ENCODE measurements at regions of chr1 and their contacts with region 1.

Region 1: GRCh38 chr1:11045428-11046269 is 1.4 kb downstream of the MASP2 start:
- DNase-seq: no peak
- ATAC-seq: peak; percentile 3; the same call in 1 of the 3 replicates
- H3K4me3 ChIP-seq: peak overlapping the region in 1 of 3 experiments; percentile 72; a peak in 1 of 6 replicates
- H3K27ac ChIP-seq: peak overlapping the region; percentile 85
- H3K4me1 ChIP-seq: peaks cover 28% of the 10 kb centered on the region
- H3K27me3 ChIP-seq: no peaks in the 10 kb centered on the region
- CTCF ChIP-seq: no peak
- EP300 ChIP-seq: no peak
- POLR2A ChIP-seq: no peak
- RAD21 ChIP-seq: no peak

Region 2: DNA sequence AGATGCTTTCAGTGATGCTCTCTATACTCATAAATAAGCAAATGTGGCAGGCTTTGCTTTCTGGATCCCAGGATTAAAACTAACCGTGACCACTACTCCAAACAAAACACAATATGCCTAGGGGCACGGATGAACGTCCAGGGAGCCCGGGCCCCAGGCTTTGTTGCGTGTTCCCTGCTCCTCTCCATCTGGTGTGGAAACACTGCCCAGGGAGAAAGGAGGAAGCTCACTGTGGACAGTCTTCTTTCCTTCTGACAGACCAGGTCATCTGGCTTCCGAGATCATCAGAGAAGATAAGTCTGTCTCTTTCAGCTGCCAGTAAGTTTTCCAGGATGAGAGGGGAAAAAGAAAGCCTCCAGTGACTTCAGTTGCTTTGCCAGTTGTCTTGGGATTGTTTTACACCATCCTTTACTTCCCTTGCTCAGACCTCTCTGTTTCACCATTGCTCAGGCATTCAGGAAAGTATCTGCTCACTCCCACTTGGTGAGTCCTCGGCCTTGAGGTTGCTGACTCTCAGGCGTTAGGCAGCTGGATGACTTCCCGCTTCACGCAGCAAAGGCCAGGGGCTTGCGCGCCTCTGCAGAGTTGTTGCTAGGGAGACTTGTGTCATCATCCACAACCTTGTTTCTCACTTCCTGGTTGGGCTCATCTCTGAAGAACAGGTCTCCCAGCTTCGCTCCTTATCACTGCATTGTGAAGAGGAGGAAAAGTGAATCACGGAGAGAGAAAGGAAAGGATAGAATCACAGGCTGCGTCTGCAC is 667.4 kb before region 1 on chr1:
- CTCF ChIA-PET with region 1: no interaction called
- POLR2A ChIA-PET with region 1: no interaction called
- in situ Hi-C with region 1: no loop called
- intact Hi-C with region 1: no loop called
- DNase-seq: no peak
- ATAC-seq: no peak
- H3K4me3 ChIP-seq: no peak overlapping the region
- H3K27ac ChIP-seq: no peak overlapping the region
- H3K4me1 ChIP-seq: peaks cover 11% of the 10 kb centered on the region; the same call in 1 of the 2 replicates
- H3K27me3 ChIP-seq: no peaks in the 10 kb centered on the region
- CTCF ChIP-seq: no peak
- EP300 ChIP-seq: no peak
- POLR2A ChIP-seq: no peak
- RAD21 ChIP-seq: no peak

Region 3: DNA sequence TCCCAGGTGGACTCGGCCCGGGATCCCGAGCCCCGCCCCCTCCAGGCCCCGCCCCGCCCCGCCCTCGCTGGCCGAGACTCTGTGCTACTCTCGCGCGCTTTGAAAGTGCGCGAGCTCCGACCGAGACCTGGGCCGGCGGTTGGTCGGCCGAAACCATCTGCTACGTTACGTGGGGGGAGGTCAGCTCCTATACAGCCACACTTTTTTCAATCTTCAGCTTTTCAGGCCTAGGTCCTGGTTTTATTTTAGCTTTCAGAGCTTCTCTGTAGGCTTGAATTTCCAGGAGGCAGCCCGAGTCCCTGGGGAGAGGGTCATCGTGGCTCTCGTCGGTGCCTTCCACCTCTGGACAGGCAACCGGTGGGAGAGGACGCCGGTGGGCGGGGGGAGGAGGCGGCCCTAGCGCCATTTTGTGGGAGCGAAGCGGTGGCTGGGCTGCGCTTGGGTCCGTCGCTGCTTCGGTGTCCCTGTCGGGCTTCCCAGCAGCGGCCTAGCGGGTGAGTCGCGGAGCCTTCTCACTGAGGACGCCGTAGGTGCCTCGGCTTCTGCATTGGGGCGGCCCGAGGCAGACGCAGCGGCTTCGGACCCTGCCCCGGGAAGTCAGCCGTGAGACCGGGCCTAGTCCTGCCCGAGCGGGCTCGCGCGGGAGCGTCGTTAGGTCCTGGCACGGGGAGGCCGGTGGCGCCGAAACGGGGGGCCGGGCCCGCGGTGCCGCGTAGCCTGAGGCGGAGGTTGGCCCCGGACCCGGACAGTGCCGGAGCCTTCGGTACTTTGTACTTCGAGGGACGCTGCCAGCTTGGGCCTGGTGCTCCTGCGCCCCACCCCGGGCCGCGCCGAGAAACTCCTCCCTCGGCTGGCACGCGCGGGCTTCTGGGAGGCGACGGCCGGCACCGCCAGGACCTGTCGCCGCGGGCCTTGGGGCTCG is 33.1 kb before region 1 on chr1 and contains the start of gene TARDBP:
- CTCF ChIA-PET with region 1: no interaction called
- POLR2A ChIA-PET with region 1: interaction called, 13 read pairs
- in situ Hi-C with region 1: no loop called
- intact Hi-C with region 1: no loop called
- DNase-seq: peak; percentile 79
- ATAC-seq: peak; percentile 88
- H3K4me3 ChIP-seq: peak within 1 kb of the TSS; percentile 83 to 100 (median 99)
- H3K27ac ChIP-seq: peak within 1 kb of the TSS; percentile 99
- H3K4me1 ChIP-seq: peaks cover 40% of the 10 kb centered on the region
- H3K27me3 ChIP-seq: no peaks in the 10 kb centered on the region; a peak in 1 of 5 replicates
- CTCF ChIP-seq: no peak
- EP300 ChIP-seq: peak in 1 of 2 experiments; percentile 10; a peak in 1 of 4 replicates
- POLR2A ChIP-seq: peak; percentile 89 to 97
- RAD21 ChIP-seq: no peak; the same call in 1 of the 2 replicates
- total RNA-seq, gene TARDBP: 62.4 and 159 TPM in 2 replicates

Region 4: GRCh38 chr1:11026052-11026451 is 19.6 kb before region 1 on chr1:
- CTCF ChIA-PET with region 1: no interaction called
- POLR2A ChIA-PET with region 1: no interaction called
- in situ Hi-C with region 1: no loop called
- intact Hi-C with region 1: no loop called
- DNase-seq: no peak
- ATAC-seq: no peak
- H3K4me3 ChIP-seq: no peak overlapping the region
- H3K27ac ChIP-seq: no peak overlapping the region
- H3K4me1 ChIP-seq: no peaks in the 10 kb centered on the region
- H3K27me3 ChIP-seq: no peaks in the 10 kb centered on the region
- CTCF ChIP-seq: no peak
- EP300 ChIP-seq: no peak
- POLR2A ChIP-seq: no peak
- RAD21 ChIP-seq: no peak

Region 5: GRCh38 chr1:11059990-11060830 is 14.6 kb after region 1 on chr1 and contains the start of gene SRM:
- CTCF ChIA-PET with region 1: no interaction called
- POLR2A ChIA-PET with region 1: interaction called, 18 read pairs
- in situ Hi-C with region 1: no loop called
- intact Hi-C with region 1: no loop called
- DNase-seq: peak; percentile 76
- ATAC-seq: peak; percentile 94
- H3K4me3 ChIP-seq: peak within 1 kb of the TSS; percentile 85 to 97 (median 86)
- H3K27ac ChIP-seq: peak within 1 kb of the TSS; percentile 77
- H3K4me1 ChIP-seq: peaks cover 30% of the 10 kb centered on the region
- H3K27me3 ChIP-seq: no peaks in the 10 kb centered on the region; a peak in 1 of 5 replicates
- CTCF ChIP-seq: peak; percentile 38; the same call in 1 of the 2 replicates
- EP300 ChIP-seq: no peak
- POLR2A ChIP-seq: peak; percentile 67 to 77; a peak in 2 of 4 replicates
- RAD21 ChIP-seq: peak; percentile 32
- total RNA-seq, gene SRM: 30.3 and 31.8 TPM in 2 replicates

Region 6: DNA sequence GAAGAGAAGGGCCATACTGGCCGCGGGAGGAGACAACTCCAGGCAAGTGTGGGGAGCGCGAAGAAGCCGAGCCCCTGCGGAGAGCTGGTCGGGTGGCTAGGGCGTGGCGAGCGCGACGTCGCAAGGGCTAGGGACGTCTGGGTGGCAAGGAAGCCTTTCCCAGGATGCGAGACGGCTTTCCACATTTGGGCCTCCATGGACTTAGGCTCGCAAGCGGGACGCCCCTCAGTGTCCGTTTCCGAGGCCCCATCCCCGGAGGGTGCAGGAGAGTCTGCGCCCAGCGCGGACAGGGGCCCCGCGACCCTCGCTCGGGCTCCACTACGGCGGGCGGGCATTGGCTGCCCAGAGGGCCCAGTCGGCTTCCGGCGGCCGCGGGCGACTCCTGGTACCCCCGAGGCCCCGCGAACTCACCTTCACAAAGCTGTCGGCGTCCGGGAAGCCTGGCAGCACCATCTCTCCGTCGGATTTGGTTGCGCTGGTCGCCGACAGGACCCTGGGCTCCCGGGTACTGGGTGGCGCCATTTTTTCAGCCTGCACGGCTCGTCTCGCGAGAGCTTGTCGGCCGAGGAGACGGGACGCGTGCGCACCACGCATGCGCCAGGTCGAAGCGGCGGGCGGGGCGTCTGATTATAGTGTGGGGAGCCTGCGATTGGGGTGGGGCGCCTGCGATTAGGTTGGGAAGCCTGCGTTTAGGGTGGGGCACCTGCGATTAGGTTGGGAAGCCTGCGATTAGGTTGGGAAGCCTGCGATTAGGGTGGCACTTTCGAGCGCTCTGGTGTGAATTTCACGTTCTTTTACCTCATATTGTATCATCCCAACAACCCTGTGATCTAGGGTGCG is 53.9 kb after region 1 on chr1 and contains the start of gene EXOSC10:
- CTCF ChIA-PET with region 1: no interaction called
- POLR2A ChIA-PET with region 1: interaction called, 12 read pairs
- in situ Hi-C with region 1: no loop called
- intact Hi-C with region 1: no loop called
- DNase-seq: peak; percentile 81
- ATAC-seq: peak; percentile 92
- H3K4me3 ChIP-seq: peak within 1 kb of the TSS; percentile 94 to 98 (median 95)
- H3K27ac ChIP-seq: peak within 1 kb of the TSS; percentile 85
- H3K4me1 ChIP-seq: peaks cover 20% of the 10 kb centered on the region
- H3K27me3 ChIP-seq: no peaks in the 10 kb centered on the region; a peak in 1 of 5 replicates
- CTCF ChIP-seq: 0 out of 2 replicates have a peak, but pooled peaks have one; percentile 17
- EP300 ChIP-seq: 0 out of 4 replicates have a peak, but pooled peaks of 1 of the 2 experiments have one; percentile 22
- POLR2A ChIP-seq: peak; percentile 65 to 83
- RAD21 ChIP-seq: peak; percentile 34; the same call in 1 of the 2 replicates
- total RNA-seq, gene EXOSC10: 67.6 and 68.7 TPM in 2 replicates